ENCODE measurements at regions of chr13 and their contacts with region 1.

Region 1: DNA sequence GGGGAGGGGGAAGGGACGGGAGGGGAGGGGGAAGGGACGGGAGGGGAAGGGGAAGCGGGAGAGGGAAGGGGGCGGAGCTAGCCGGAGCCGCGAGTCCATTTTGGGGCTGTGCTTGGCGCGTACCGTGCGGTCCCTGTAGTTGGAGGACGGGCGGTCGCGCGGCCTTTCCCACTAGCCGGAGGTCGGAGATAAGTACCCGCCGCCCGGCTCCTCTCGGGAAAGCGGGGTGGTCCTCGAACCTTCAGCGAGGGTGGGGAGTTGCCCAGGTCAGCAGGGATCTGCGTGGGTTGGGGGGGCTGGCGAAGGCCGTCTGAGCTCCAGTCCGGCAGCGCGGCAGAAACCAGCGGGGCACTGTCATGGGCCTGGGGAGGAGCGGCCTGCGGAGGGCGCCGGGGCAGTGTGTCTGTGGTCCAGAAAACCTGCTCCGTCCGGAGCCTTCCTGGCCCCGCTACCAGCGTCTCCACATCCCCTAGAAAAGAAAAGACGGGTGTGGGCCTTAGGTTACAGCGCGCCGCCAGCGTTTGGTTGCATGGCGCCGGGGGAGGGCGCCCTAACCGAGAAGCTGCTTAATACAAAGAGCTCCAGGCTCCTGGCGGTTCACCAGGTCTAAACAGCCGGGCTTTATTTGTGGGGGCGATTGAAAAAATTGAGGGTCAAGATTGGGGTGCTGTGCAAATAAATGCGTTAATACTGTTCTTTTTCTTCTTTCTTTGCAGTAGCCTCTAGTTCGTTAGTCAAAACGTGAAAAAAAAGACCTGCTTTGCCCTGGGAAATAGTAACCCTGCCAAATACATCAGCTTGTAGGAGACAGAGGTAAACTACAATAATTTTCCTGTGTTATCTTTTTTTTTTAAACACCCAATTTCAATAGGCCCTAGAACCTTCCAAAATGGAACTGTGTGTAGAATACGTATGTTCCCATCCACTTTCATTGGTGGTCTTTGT is at the start of gene TRIM13:
- DNase-seq: peak; percentile 90
- H3K4me3 ChIP-seq: peak within 1 kb of the TSS; percentile 71
- H3K27ac ChIP-seq: peak within 1 kb of the TSS; percentile 99
- H3K4me1 ChIP-seq: peaks cover 18% of the 10 kb centered on the region
- H3K27me3 ChIP-seq: no peaks in the 10 kb centered on the region
- CTCF ChIP-seq: peak; percentile 66
- total RNA-seq, gene TRIM13: 21.7 to 35.0 TPM

Region 2: DNA sequence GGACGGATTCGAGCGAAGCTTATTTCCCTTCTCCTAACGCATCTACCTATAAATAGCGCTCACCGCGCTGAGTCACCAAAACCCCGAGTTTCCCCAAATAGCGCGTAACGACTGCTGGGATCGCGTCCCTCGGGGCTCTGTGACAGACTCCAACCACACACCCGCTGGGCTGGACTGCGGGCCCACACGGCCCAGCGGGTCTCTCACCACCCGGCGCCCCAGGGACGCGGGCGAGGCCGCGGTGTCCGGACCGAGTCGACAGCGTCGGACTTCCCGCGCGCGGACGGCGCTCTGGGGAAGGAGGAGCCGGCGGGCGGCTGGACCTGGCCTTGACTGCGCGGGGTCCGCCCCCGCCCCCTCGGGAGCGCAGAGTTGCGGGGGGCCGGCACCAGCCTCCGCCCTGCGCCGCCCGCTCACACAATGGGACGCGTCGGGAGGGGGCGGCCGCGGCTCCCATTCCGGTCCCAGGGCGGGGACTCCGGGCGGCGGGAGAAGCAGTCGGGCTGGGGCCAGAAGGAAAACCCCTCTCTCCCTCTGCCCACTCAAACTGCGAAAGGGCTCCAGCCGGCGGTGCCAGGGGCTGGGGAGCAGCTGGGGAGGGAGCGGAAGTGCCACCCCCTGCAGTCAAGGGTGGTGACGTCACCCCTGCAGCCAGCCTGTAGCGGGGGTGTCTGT is 126.8 kb after region 1 on chr13:
- intact Hi-C with region 1: loop called (anchors 5 kb)
- DNase-seq: peak; percentile 74
- H3K4me3 ChIP-seq: peak overlapping the region; percentile 67
- H3K27ac ChIP-seq: peak overlapping the region; percentile 98
- H3K4me1 ChIP-seq: peaks cover 13% of the 10 kb centered on the region
- H3K27me3 ChIP-seq: peaks cover 9% of the 10 kb centered on the region
- CTCF ChIP-seq: no peak